Left ventricle myocardium inferior (tissue), 1 donor: ENCODE measurements at regions of chr4 and their contacts with region 1.

Region 1: DNA sequence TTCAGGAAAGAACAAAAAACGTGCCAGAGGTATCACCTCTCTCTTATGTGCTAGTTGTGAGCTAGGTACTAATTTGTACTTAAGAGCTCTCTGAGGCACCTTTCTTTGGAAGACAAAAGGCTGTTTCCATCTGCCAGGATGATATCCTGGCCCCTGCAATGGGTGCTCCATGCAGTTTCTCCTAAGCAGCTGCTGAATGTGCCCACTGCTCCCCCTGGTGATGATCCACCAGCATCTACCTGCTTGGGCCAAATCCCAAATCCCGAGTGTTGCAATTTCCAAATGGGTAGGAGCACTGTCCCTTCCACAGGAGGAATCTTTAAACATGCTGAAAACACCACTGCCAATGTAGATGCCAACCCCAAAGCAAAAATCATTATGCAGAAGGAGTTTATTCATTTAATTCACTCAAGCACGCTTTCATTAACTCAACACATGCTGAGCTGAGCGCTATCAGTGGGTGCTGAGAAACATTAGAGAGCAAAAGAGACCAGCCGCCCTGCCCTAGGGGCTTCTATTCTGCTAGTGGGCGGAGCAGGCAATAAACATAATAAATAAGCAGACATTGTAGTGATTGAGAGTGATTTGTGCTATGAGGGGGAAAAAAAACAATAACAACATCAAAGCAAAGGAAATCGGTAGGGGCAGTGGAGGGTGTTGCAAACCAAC is 69.6 kb upstream of the C4orf50 start:
- DNase-seq: no peak
- H3K4me3 ChIP-seq: no peak overlapping the region
- H3K27ac ChIP-seq: no peak overlapping the region
- H3K4me1 ChIP-seq: no peaks in the 10 kb centered on the region
- H3K27me3 ChIP-seq: peaks cover 68% of the 10 kb centered on the region
- CTCF ChIP-seq: peak; percentile 60

Region 2: GRCh38 chr4:5998333-5998936 is 89.4 kb before region 1 on chr4:
- intact Hi-C with region 1: loop called (anchors 10 kb)
- DNase-seq: no peak
- H3K4me3 ChIP-seq: no peak overlapping the region
- H3K27ac ChIP-seq: no peak overlapping the region
- H3K4me1 ChIP-seq: no peaks in the 10 kb centered on the region
- H3K27me3 ChIP-seq: peaks cover 79% of the 10 kb centered on the region
- CTCF ChIP-seq: peak; percentile 94

Region 3: GRCh38 chr4:6427439-6428090 is 339.8 kb after region 1 on chr4:
- intact Hi-C with region 1: no loop called
- DNase-seq: no peak
- H3K4me3 ChIP-seq: no peak overlapping the region
- H3K27ac ChIP-seq: no peak overlapping the region
- H3K4me1 ChIP-seq: no peaks in the 10 kb centered on the region
- H3K27me3 ChIP-seq: peaks cover 42% of the 10 kb centered on the region
- CTCF ChIP-seq: no peak